Sciatic nerve (tissue), 2 donors: ENCODE measurements at regions of chr4 and their contacts with region 1.

Region 1: GRCh38 chr4:102610007-102610406 is 108.8 kb downstream of the NFKB1 start:
- DNase-seq: no peak
- ATAC-seq: no peak

Region 2: GRCh38 chr4:102007959-102008425 is 602.0 kb before region 1 on chr4:
- intact Hi-C with region 1: no loop called
- DNase-seq: no peak
- ATAC-seq: no peak

Region 3: DNA sequence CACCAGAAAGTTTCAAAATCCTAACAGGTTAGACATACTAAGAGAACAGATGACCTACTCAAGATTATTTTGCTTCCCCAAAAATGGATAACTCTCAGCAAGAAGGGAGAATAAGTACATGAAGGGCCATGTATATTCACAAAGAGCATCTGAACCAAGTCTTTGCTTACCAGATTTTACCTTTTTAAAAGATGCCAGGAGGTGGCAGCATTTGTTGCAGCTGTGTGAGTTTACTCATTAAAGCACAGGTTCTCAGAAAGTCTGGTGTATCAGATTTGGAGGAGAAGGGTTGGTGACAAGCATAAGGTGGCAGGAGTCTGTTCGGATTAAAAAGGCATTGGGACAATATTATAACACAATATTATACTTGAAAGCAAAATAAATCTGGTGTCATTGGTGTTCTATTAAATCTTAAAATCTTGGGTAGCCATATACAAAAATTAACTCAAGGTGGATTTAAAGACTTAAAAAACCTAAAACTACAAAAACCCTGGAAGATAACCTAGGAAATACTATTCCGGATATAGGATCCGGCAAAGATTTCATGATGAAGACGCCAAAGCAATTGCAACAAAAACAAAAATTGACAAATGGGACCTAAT is 160.2 kb before region 1 on chr4:
- intact Hi-C with region 1: loop called (anchors 10 kb)
- DNase-seq: no peak
- ATAC-seq: peak; percentile 66